Natural killer cell (primary cell): ENCODE measurements at regions of chr7 and their contacts with region 1.

Region 1: GRCh38 chr7:130063036-130063435 is 7.3 kb upstream of the KLHDC10 start:
- DNase-seq: peak; percentile 50 to 74
- ATAC-seq: peak; percentile 67 to 72 (median 71)
- H3K4me3 ChIP-seq: no peak overlapping the region
- H3K4me3 Mint-ChIP-seq: no peak overlapping the region
- H3K27ac ChIP-seq: no peak overlapping the region
- H3K27ac Mint-ChIP-seq: no peak overlapping the region
- H3K4me1 ChIP-seq: no peaks in the 10 kb centered on the region
- H3K4me1 Mint-ChIP-seq: no peaks in the 10 kb centered on the region
- H3K27me3 ChIP-seq: no peaks in the 10 kb centered on the region
- H3K27me3 Mint-ChIP-seq: peaks cover 0 to 10% of the 10 kb centered on the region in 2 donors
- CTCF ChIP-seq: peak; percentile 81

Region 2: GRCh38 chr7:130227883-130228575 is 165.0 kb after region 1 on chr7:
- intact Hi-C with region 1: no loop called
- DNase-seq: no peak
- ATAC-seq: no peak
- H3K4me3 ChIP-seq: no peak overlapping the region
- H3K4me3 Mint-ChIP-seq: no peak overlapping the region
- H3K27ac ChIP-seq: no peak overlapping the region
- H3K27ac Mint-ChIP-seq: no peak overlapping the region
- H3K4me1 ChIP-seq: no peaks in the 10 kb centered on the region
- H3K4me1 Mint-ChIP-seq: no peaks in the 10 kb centered on the region
- H3K27me3 ChIP-seq: no peaks in the 10 kb centered on the region
- H3K27me3 Mint-ChIP-seq: peaks cover 3 to 12% of the 10 kb centered on the region in 2 donors
- CTCF ChIP-seq: no peak

Region 3: GRCh38 chr7:130758429-130759056 is 695.5 kb after region 1 on chr7:
- intact Hi-C with region 1: loop called (anchors 1 kb)
- DNase-seq: peak in 1 of 2 donors; percentile 75
- ATAC-seq: peak in 2 of 3 donors; percentile 56 to 58
- H3K4me3 ChIP-seq: no peak overlapping the region
- H3K4me3 Mint-ChIP-seq: no peak overlapping the region
- H3K27ac ChIP-seq: no peak overlapping the region
- H3K27ac Mint-ChIP-seq: no peak overlapping the region
- H3K4me1 ChIP-seq: no peaks in the 10 kb centered on the region
- H3K4me1 Mint-ChIP-seq: no peaks in the 10 kb centered on the region
- H3K27me3 ChIP-seq: no peaks in the 10 kb centered on the region
- H3K27me3 Mint-ChIP-seq: peaks cover 12 to 22% of the 10 kb centered on the region in 2 donors
- CTCF ChIP-seq: peak; percentile 85

Region 4: DNA sequence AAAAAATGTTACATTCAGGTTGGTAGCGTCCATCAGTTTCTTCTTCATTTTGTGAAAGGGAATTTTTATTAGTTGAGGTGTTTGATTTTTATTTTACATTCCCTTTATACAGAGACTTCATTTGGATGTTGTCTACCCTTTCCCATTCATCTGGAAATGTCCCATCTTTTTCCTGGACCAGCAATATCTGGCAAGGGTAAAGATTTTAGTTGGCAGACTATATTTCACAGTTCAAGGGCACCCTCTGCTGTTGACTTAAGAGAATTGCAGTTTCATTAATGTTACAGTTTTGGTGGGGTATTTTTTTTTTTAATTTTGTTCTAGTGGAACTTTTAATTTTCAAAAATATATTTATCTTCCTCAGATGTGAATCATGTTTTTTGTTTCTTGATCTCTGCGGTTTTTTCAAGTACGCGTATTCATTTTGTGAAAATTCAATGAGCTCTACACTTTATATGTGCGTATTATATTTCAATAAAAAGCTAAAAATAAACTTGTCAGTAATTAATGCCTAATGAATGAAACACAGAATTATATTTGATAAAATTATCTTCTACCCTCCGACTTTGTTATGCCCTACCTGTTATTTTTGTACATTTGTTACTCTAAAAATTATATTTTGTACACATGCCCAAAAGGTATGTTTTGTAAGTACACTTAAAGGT is 768.9 kb after region 1 on chr7:
- intact Hi-C with region 1: loop called (anchors 1 kb)
- DNase-seq: peak in 1 of 2 donors; percentile 75
- ATAC-seq: peak in 2 of 3 donors; percentile 52 to 58
- H3K4me3 ChIP-seq: no peak overlapping the region
- H3K4me3 Mint-ChIP-seq: no peak overlapping the region
- H3K27ac ChIP-seq: no peak overlapping the region
- H3K27ac Mint-ChIP-seq: no peak overlapping the region
- H3K4me1 ChIP-seq: no peaks in the 10 kb centered on the region
- H3K4me1 Mint-ChIP-seq: no peaks in the 10 kb centered on the region
- H3K27me3 ChIP-seq: no peaks in the 10 kb centered on the region
- H3K27me3 Mint-ChIP-seq: peaks cover 12 to 16% of the 10 kb centered on the region in 2 donors
- CTCF ChIP-seq: peak; percentile 86